MCF 10A (cell line): ENCODE measurements at regions of chrX and their contacts with region 1.

Region 1: DNA sequence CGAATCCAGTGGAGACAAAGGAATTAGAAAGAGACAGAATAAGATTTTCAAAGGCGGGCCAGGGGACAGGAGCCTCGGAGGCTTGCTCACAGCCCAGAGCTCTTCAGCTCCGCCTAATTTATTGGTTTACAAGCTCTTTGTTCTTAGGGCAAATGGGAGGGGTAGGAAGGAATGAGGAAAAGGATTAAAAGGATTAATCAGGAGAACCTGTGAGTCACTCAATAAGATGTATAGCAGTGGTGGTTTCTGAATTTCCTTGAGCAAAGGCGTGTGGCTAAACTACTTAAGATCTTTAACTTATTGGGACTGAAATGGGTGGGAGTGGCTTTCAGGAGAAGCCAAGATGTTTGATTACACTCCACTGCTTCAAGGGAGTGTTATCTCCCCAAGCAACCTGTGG is 456.0 kb upstream of the SPANXN1 start:
- DNase-seq: peak; percentile 48
- H3K4me3 Mint-ChIP-seq: peak overlapping the region; percentile 40
- H3K27ac Mint-ChIP-seq: peak overlapping the region; percentile 99
- H3K4me1 Mint-ChIP-seq: peaks cover 25% of the 10 kb centered on the region
- H3K27me3 Mint-ChIP-seq: no peaks in the 10 kb centered on the region
- CTCF ChIP-seq: no peak

Region 2: DNA sequence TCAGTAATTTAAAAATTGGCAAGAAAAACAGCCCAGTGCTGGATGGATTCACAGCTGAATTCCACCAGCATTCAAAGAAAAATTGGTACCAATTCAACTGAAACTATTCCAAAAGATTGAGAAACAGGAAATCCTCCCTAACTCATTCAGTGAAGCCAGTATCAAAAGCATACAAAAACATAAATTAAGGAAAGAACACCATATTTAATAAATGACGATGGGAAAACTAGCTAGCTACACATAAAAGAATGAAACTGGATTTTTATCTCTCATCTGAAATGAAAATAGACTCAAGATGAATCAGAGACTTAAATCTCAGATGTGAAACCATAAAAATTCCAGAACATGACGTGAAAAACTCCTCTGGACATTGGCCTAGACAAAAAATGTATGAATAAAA is 60.8 kb before region 1 on chrX:
- CTCF ChIA-PET with region 1: no interaction called
- POLR2A ChIA-PET with region 1: interaction called, 3 read pairs
- intact Hi-C with region 1: loop called (anchors 5 kb)
- DNase-seq: peak; percentile 79
- H3K4me3 Mint-ChIP-seq: peak overlapping the region; percentile 65
- H3K27ac Mint-ChIP-seq: peak overlapping the region; percentile 97
- H3K4me1 Mint-ChIP-seq: peaks cover 44% of the 10 kb centered on the region
- H3K27me3 Mint-ChIP-seq: no peaks in the 10 kb centered on the region
- CTCF ChIP-seq: no peak

Region 3: DNA sequence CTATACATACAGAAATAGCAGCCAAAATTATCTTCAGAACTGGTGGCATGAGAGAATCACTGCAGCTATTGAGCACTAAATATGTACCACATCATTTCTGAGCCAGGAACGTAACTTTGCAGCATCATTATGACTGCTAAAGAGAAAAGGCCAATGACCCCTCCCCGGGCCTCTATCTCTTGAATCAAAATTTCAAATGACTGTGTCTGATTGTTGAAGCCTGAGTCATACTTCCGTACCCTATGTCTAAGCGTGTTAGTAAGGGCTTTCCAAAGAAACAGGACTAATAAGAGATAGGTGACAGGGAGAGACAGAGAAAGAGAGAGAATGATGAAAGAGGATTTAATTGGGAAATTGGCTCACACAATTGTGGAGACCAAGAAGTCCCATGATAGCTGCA is 10.5 kb after region 1 on chrX:
- CTCF ChIA-PET with region 1: interaction called, 3 read pairs
- POLR2A ChIA-PET with region 1: interaction called, 10 read pairs
- intact Hi-C with region 1: no loop called
- DNase-seq: peak; percentile 72
- H3K4me3 Mint-ChIP-seq: no peak overlapping the region
- H3K27ac Mint-ChIP-seq: peak overlapping the region; percentile 67
- H3K4me1 Mint-ChIP-seq: peaks cover 13% of the 10 kb centered on the region
- H3K27me3 Mint-ChIP-seq: no peaks in the 10 kb centered on the region
- CTCF ChIP-seq: no peak

Region 4: DNA sequence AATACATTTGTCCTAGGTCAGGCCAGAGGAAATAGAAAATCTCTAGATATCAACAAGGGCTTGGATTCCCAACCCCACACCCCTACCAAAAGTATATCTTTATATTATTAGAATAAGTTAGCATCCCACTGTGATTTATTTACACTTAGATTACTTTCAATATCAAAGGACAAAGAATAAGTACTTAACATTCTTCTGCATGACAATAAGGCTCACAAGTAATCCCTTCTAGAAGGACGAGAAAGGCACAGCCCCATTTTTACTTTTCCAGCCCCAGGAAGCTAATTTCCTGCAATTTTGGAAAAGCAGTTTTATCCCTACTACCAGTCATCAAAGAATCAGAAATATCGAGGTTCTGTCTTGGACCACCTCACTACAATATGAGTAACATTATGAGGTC is 1012.2 kb after region 1 on chrX:
- CTCF ChIA-PET with region 1: no interaction called
- POLR2A ChIA-PET with region 1: no interaction called
- intact Hi-C with region 1: no loop called
- DNase-seq: no peak
- H3K4me3 Mint-ChIP-seq: no peak overlapping the region
- H3K27ac Mint-ChIP-seq: no peak overlapping the region
- H3K4me1 Mint-ChIP-seq: no peaks in the 10 kb centered on the region
- H3K27me3 Mint-ChIP-seq: no peaks in the 10 kb centered on the region
- CTCF ChIP-seq: no peak